Ascending aorta (tissue), 2 donors: ENCODE measurements at regions of chr20 and their contacts with region 1.

Region 1: GRCh38 chr20:36886859-36887751 is 11.2 kb downstream of the TLDC2 start:
- DNase-seq: peak in 1 of 2 donors; percentile 90
- H3K4me3 ChIP-seq: peak overlapping the region in 1 of 2 donors; percentile 12
- H3K27ac ChIP-seq: no peak overlapping the region
- H3K4me1 ChIP-seq: no peaks in the 10 kb centered on the region
- H3K27me3 ChIP-seq: no peaks in the 10 kb centered on the region
- CTCF ChIP-seq: peak; percentile 93 to 96 (median 95)

Region 2: DNA sequence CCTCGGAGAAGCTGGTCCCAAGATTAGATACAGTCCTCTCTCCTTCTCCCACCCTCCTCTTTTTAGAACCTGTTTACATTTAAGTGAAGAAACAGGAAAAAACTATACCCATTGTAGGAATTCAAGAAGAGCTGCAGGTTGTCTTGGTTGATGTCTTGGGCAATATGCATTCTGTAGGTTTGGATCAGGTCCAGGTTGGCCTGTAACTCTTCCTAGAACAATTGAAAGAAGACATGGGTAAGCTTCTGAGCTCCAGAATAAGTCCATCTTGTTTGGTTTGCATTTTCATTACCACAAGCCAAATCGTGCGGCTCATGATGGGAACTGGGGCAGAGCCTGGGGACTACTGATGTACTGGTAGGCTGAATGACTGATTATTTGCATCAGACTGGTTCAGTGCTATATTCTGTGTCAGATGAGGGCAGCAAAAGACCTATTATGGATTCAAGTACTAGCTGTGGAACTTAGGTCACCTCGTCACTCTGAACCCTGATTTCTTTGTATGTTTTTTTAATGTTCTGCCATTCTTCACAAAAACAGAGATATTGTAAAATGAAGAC is 220.8 kb before region 1 on chr20:
- intact Hi-C with region 1: loop called (anchors 10 kb)
- DNase-seq: no peak
- H3K4me3 ChIP-seq: no peak overlapping the region
- H3K27ac ChIP-seq: no peak overlapping the region
- H3K4me1 ChIP-seq: no peaks in the 10 kb centered on the region
- H3K27me3 ChIP-seq: no peaks in the 10 kb centered on the region
- CTCF ChIP-seq: peak; percentile 23 to 45 (median 41)

Region 3: GRCh38 chr20:36792422-36792821 is 94.7 kb before region 1 on chr20:
- intact Hi-C with region 1: loop called (anchors 5 kb)
- DNase-seq: peak in 1 of 2 donors; percentile 76
- H3K4me3 ChIP-seq: no peak overlapping the region
- H3K27ac ChIP-seq: no peak overlapping the region
- H3K4me1 ChIP-seq: peaks cover 0 to 7% of the 10 kb centered on the region in 2 donors
- H3K27me3 ChIP-seq: no peaks in the 10 kb centered on the region
- CTCF ChIP-seq: peak in 2 of 3 experiments; percentile 22 to 48

Region 4: GRCh38 chr20:36835453-36836198 is 51.5 kb before region 1 on chr20:
- intact Hi-C with region 1: loop called (anchors 2 kb)
- DNase-seq: peak; percentile 77 to 96
- H3K4me3 ChIP-seq: peak overlapping the region; percentile 18 to 56
- H3K27ac ChIP-seq: peak overlapping the region; percentile 81 to 92
- H3K4me1 ChIP-seq: peaks cover 22 to 50% of the 10 kb centered on the region in 2 donors
- H3K27me3 ChIP-seq: no peaks in the 10 kb centered on the region
- CTCF ChIP-seq: no peak